ENCODE measurements at regions of chr1 and their contacts with region 1.

Region 1: GRCh38 chr1:45583264-45583665 is 576 bp upstream of the NASP start:
- DNase-seq: peak; percentile 94 to 97
- ATAC-seq: peak; percentile 79

Region 2: DNA sequence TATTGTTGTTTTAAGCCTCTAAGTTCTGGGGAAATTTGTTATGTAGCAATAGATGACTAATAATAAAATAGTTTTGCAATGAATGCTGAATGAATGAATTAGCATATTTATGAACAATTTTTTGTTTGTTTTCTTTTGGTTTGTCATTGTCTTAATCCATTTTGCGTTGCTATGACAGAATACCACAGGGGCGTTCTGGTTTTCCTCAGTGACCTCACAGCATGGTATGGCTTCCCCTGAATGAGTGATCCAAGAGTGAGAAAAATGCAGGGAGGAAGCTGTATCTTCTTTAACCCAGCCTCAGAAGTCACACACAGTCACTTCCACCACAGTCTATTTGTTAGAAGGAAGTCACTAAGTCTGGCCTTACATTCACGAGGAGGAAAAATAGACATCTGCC is 310.3 kb before region 1 on chr1:
- intact Hi-C with region 1: no loop called
- DNase-seq: no peak
- ATAC-seq: no peak

Region 3: DNA sequence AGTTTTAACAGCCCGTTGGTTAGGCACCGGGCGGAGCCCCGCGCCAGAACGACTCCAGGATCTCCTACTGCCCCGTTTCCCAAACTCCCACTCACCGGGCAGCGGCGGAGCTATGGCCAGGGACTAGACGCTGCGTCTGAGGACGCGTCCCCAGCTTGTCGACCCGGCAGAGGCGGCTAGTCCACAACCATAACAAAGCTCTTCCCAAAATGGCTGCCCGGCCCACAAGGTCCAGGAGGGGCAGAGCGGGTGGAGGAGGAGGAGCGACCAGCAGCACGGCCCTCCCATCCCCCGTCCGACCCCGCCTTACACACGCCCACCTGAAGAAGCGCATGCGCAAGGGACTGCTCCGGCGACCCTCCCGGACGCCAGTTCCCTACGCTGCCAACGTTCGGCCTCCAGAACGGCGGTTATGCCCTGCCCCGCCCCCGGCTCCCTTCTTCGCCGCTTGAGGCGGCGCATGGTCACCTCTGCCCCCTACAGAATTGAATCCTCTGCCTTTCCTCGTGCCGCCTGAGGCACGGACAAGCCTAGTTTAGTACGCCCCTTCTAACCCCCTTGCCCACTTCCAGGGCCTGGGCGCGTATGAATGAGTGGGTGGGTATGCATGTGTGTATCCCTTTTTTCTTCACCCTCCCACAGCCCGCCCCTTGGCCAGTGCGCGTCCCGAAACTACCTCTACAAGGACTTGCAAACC is 103.2 kb after region 1 on chr1 and contains the start of gene GPBP1L1:
- intact Hi-C with region 1: loop called in 1 of 2 experiments (anchors 10 kb)
- DNase-seq: peak; percentile 98
- ATAC-seq: peak; percentile 78
- total RNA-seq, gene GPBP1L1: 193 to 195 TPM

Measured in left colon (tissue), 2 donors.